Mammary epithelial cell (primary cell): ENCODE measurements at regions of chr3 and their contacts with region 1.

Region 1: GRCh38 chr3:139319428-139320402 is 24.1 kb upstream of the MRPS22 start:
- DNase-seq: no peak
- H3K4me3 ChIP-seq: no peak overlapping the region
- H3K27ac ChIP-seq: no peak overlapping the region
- H3K4me1 ChIP-seq: peaks cover 18% of the 10 kb centered on the region
- H3K27me3 ChIP-seq: no peaks in the 10 kb centered on the region
- CTCF ChIP-seq: peak; percentile 32 to 37

Region 2: GRCh38 chr3:139120086-139121056 is 199.3 kb before region 1 on chr3:
- CTCF ChIA-PET with region 1: no interaction called
- dilution Hi-C with region 1: loop called (anchors 5 kb)
- in situ Hi-C with region 1: loop called in 1 of 2 experiments (anchors 25 kb)
- intact Hi-C with region 1: no loop called
- DNase-seq: peak; percentile 44
- H3K4me3 ChIP-seq: no peak overlapping the region
- H3K27ac ChIP-seq: no peak overlapping the region
- H3K4me1 ChIP-seq: peaks cover 15% of the 10 kb centered on the region
- H3K27me3 ChIP-seq: no peaks in the 10 kb centered on the region
- CTCF ChIP-seq: no peak

Region 3: DNA sequence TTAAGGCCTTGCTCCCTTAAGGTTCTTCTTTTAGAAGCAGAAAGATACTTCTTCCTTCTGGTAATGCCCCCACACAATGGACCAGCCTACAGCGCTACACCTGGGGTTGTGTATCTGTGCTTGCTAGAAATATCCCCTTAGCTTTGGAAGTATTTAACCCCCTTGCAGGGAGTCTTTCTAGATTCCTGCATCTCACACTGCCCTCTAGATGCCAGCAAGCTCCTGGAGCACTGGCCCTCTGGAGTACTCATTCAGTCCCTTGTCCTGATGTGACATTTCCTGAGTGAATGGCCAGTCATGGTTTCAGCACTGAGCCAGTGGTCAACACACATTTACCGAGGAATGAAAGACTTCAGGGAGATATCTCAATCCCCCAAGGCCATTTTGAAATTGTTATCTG is 187.1 kb after region 1 on chr3:
- CTCF ChIA-PET with region 1: no interaction called
- dilution Hi-C with region 1: no loop called
- in situ Hi-C with region 1: no loop called
- intact Hi-C with region 1: no loop called
- DNase-seq: no peak
- H3K4me3 ChIP-seq: no peak overlapping the region
- H3K27ac ChIP-seq: no peak overlapping the region
- H3K4me1 ChIP-seq: no peaks in the 10 kb centered on the region
- H3K27me3 ChIP-seq: peaks cover 4% of the 10 kb centered on the region
- CTCF ChIP-seq: peak in 1 of 2 donors; percentile 44